AG04449 (cell line): ENCODE measurements at regions of chr10 and their contacts with region 1.

Region 1: DNA sequence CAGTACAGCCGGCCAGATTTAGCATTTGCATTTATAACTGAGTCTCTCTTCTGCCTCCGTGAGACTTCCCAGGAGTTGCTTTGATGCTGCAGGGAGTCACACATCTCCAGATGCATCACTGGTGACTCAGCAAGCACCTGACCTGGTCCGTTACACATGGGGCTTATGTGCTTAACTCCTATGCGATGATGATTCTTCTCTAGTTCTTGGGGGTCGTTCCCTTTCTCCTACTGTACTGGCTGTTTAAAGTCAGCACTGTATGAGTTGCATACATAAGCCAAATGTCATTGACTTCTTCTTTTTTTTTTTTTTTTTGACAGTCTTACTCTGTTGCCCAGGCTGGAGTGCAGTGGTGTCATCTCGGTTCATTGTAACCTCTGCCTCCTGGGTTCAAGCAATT is 13.0 kb upstream of the AKR1E2 start:
- DNase-seq: peak; percentile 21
- H3K4me3 ChIP-seq: no peak overlapping the region
- CTCF ChIP-seq: no peak

Region 2: GRCh38 chr10:4767033-4767814 is 45.8 kb before region 1 on chr10:
- CTCF ChIA-PET with region 1: interaction called, 12 read pairs
- POLR2A ChIA-PET with region 1: no interaction called
- DNase-seq: no peak
- H3K4me3 ChIP-seq: no peak overlapping the region
- CTCF ChIP-seq: peak; percentile 55

Region 3: DNA sequence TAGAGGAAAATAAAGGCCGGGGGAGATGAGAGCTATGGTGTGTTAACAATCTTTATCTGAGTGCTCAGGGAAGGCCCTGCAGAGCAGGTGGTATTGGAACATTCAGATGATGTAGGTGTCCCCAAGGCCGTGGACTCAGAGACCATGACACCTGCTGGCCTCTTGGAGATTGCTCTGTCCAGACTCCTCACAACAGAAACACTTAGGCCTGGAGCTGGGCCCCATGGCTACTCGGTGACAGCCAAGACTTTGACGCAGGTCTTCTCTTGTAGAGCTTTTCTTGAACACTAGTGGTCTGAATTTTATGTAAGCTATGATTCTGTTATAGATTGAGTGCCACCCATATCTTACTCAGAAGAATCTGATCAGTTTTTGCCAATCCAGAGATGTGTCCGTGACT is 26.4 kb after region 1 on chr10:
- CTCF ChIA-PET with region 1: interaction called, 47 read pairs
- POLR2A ChIA-PET with region 1: no interaction called
- DNase-seq: no peak
- H3K4me3 ChIP-seq: no peak overlapping the region
- CTCF ChIP-seq: no peak

Region 4: GRCh38 chr10:5423771-5424170 is 610.7 kb after region 1 on chr10:
- CTCF ChIA-PET with region 1: interaction called, 23 read pairs
- POLR2A ChIA-PET with region 1: no interaction called
- DNase-seq: no peak
- H3K4me3 ChIP-seq: no peak overlapping the region
- CTCF ChIP-seq: no peak

Region 5: DNA sequence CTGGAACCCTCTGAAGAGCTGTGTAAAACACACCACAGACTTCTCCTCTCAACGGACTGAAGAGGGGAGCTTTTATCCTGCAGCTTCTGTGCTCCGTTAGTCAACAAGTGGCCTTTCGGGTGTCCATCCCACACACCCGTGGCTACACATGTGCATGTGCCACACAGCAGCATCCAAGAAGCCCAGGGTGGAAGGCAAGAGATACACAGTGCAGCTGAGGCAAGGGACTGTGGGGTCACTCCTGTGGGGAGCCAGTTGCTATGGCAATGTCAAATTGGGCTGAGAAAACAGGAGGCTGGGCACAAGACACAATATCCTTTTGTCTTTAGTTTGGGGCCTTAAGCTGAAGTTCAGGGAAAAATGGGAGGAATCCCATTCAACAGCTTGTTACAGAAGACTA is 628.1 kb after region 1 on chr10:
- CTCF ChIA-PET with region 1: interaction called, 85 read pairs
- POLR2A ChIA-PET with region 1: no interaction called
- DNase-seq: no peak
- H3K4me3 ChIP-seq: no peak overlapping the region
- CTCF ChIP-seq: no peak

Region 6: DNA sequence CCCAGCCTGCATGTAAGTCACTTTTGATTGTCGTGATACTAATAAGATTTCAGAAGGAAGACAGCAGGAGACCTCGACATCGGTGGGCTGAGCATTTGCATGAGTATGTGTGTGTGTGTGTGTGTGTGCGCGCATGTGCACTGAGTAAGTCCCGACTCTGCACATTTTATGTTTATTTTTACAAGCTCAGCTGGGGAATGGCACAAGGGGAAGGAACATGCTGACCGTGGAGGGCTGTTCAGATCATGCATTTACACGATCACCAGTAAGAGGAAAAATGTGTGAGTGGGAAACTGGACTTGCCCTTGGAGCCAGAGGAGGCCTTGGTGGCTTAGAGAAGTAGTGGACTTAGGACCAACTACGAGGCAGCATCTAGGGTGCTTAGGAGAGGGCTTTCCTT is 1207.8 kb after region 1 on chr10:
- CTCF ChIA-PET with region 1: no interaction called
- POLR2A ChIA-PET with region 1: no interaction called
- DNase-seq: no peak
- H3K4me3 ChIP-seq: no peak overlapping the region
- CTCF ChIP-seq: no peak